Activated T-helper 1 cell treated with anti-CD3 and anti-CD28 coated beads, Interleukin-12 subunit alpha, Interleukin-12 subunit beta, Interleukin-2, Interleukin-4 antibody, amounts not matched to agents 30 ng/mL and 10 ng/mL and 1 ng/mL, durations not matched to agents 14 hours and 24 hours and 36 hours (primary cell): ENCODE measurements at regions of chr12 and their contacts with region 1.

Region 1: GRCh38 chr12:124917135-124917840 is 2.8 kb upstream of the UBC start:
- DNase-seq: peak; percentile 92
- H3K4me3 Mint-ChIP-seq: peak overlapping the region; percentile 97
- H3K27ac Mint-ChIP-seq: peak overlapping the region; percentile 100
- H3K4me1 Mint-ChIP-seq: peaks cover 84% of the 10 kb centered on the region
- H3K27me3 Mint-ChIP-seq: no peaks in the 10 kb centered on the region

Region 2: DNA sequence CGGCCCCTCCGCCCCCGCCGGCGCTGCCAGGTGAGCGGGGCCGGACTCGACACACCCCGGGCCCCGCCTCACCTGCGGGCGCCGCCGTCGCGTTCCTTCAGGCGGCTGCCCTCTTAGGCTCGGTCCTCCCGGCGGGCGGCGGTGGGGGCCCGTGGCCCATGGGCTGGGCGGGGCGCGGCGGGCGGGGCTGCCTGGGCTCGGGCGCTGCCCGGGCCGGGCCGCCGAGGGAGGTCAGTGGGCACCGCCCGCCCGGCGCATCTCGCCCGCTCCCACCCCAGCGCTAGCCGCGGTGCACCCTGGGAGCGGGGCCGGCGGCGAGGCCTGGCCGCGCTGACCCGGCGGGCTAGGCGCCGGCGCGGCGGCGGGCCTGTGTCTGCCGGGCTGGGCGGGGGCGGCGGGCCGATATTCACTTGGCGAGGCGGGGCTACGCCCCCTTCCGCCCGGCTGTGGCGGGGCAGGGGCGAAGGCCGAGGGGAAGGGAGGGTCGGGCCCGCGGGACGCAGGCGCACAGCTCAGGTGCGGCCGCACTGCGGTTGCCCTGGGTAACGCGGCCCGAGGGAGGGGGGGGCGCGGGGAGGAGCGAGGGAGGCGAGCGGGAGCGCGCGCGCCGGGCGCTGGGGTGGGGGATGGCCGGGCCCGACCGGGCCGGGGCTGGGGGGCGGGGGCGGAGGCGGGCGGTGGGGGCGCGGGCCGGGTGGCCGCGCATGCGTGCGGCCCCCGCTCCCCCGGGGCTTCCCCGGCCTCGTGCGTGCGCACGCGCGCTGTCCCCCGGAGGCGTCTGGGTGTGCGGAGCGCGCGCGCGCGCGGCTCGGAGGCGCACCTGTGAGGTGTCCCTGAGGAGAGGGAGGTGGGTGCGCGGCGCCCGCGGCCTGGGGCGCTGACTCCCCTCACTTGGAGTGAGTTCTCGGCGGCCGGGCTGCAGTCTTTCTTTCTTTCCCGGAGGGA is 944.6 kb before region 1 on chr12 and contains the starts of genes CCDC92 and ZNF664:
- intact Hi-C with region 1: loop called (anchors 2 kb)
- DNase-seq: peak; percentile 91
- H3K4me3 Mint-ChIP-seq: peak within 1 kb of the TSS; percentile 91
- H3K27ac Mint-ChIP-seq: peak within 1 kb of the TSS; percentile 78
- H3K4me1 Mint-ChIP-seq: peaks cover 53% of the 10 kb centered on the region
- H3K27me3 Mint-ChIP-seq: peaks cover 15% of the 10 kb centered on the region
- total RNA-seq, gene CCDC92: 7.7 and 8.3 TPM in 2 replicates
- total RNA-seq, gene ZNF664: 66.9 and 68.1 TPM in 2 replicates

Region 3: GRCh38 chr12:124567661-124568373 is 349.5 kb before region 1 on chr12:
- intact Hi-C with region 1: loop called (anchors 2 kb)
- DNase-seq: peak; percentile 82
- H3K4me3 Mint-ChIP-seq: peak overlapping the region; percentile 85
- H3K27ac Mint-ChIP-seq: peak overlapping the region; percentile 84
- H3K4me1 Mint-ChIP-seq: peaks cover 24% of the 10 kb centered on the region
- H3K27me3 Mint-ChIP-seq: peaks cover 3% of the 10 kb centered on the region

Region 4: GRCh38 chr12:124927201-124928094 is 10.2 kb after region 1 on chr12:
- intact Hi-C with region 1: loop called (anchors 1 kb)
- DNase-seq: peak; percentile 88
- H3K4me3 Mint-ChIP-seq: peak overlapping the region; percentile 88
- H3K27ac Mint-ChIP-seq: peak overlapping the region; percentile 98
- H3K4me1 Mint-ChIP-seq: peaks cover 42% of the 10 kb centered on the region
- H3K27me3 Mint-ChIP-seq: peaks cover 9% of the 10 kb centered on the region

Region 5: GRCh38 chr12:124940549-124941527 is 23.6 kb after region 1 on chr12:
- intact Hi-C with region 1: loop called (anchors 1 kb)
- DNase-seq: peak; percentile 80
- H3K4me3 Mint-ChIP-seq: no peak overlapping the region
- H3K27ac Mint-ChIP-seq: no peak overlapping the region
- H3K4me1 Mint-ChIP-seq: no peaks in the 10 kb centered on the region
- H3K27me3 Mint-ChIP-seq: no peaks in the 10 kb centered on the region

Region 6: GRCh38 chr12:125065021-125065795 is 147.9 kb after region 1 on chr12 and contains the start of gene AACS:
- intact Hi-C with region 1: loop called (anchors 2 kb)
- DNase-seq: peak; percentile 58
- H3K4me3 Mint-ChIP-seq: peak within 1 kb of the TSS; percentile 84
- H3K27ac Mint-ChIP-seq: peak within 1 kb of the TSS; percentile 40
- H3K4me1 Mint-ChIP-seq: peaks cover 17% of the 10 kb centered on the region
- H3K27me3 Mint-ChIP-seq: peaks cover 7% of the 10 kb centered on the region
- total RNA-seq, gene AACS: 26.7 and 27.8 TPM in 2 replicates